ENCODE measurements at regions of chr3 and their contacts with region 1.

Region 1: GRCh38 chr3:125055913-125056745 is at the start of gene HEG1:
- DNase-seq: peak; percentile 96
- ATAC-seq: peak; percentile 91
- total RNA-seq, gene HEG1: 95.0 TPM

Region 2: GRCh38 chr3:125003369-125003853 is 52.7 kb before region 1 on chr3:
- intact Hi-C with region 1: loop called (anchors 2 kb)
- DNase-seq: no peak
- ATAC-seq: peak; percentile 96

Region 3: DNA sequence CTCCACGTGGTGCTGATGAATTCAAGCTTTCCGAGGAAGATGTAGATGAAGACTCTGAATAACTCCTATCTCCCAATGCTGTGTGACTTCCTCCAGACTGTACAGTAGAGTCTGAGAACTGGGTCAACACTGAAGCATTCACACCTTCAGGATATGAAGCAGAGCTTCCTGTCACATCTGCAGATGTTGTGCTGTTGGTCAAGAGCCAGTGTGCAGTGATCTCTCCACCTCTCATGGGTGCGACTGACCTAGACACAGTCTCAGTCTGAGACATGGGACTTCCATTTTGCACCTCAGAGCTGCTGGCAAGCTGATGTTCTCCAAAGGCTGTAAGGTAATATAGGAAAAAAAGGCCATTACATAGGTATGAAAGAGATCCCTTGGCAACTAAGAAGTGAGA is 36.9 kb before region 1 on chr3:
- intact Hi-C with region 1: loop called (anchors 5 kb)
- DNase-seq: no peak
- ATAC-seq: no peak

Region 4: DNA sequence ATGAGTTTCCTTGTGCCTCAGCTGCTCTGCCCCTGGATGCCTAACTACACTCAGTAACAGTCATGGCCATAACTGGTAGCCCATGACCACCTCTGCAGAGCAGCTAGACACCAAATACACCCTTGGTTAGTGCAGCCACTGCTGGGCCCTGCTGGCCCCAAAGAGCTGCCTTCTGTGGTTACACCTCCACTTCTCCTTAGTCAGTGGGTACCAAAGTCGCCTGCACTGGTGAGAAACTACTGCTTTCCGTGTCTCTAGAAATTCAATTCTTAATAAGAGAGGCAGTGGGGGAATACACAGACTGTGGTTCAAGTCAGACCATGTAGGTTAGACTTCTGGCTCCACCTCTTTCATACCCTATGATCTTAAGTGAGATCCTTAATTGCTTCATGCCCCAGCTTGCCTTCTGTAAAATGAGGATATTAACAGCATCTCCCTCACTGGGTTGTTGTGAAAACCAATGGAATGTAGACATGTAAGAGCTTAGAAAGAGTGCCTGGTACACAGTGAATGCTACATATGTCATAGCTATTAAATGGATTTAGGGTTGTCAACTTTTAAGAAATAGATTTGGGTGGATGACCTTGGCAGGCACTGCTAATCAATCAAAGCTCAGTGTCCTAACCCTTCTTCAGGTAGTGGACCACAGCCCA is 18.5 kb before region 1 on chr3:
- intact Hi-C with region 1: loop called (anchors 2 kb)
- DNase-seq: no peak
- ATAC-seq: no peak